Activated CD8-positive, alpha-beta T cell treated with anti-CD3 and anti-CD28 coated beads, Interleukin-2, amount 10 ng/mL, durations not matched to agents 7 days and 5 days (primary cell): ENCODE measurements at regions of chr4 and their contacts with region 1.

Region 1: GRCh38 chr4:82360298-82361177 is 13.3 kb downstream of the HNRNPD start:
- DNase-seq: no peak
- ATAC-seq: peak; percentile 51
- H3K4me3 Mint-ChIP-seq: no peak overlapping the region
- H3K27ac Mint-ChIP-seq: peak overlapping the region; percentile 6
- H3K4me1 Mint-ChIP-seq: peaks cover 87% of the 10 kb centered on the region
- H3K27me3 Mint-ChIP-seq: no peaks in the 10 kb centered on the region

Region 2: DNA sequence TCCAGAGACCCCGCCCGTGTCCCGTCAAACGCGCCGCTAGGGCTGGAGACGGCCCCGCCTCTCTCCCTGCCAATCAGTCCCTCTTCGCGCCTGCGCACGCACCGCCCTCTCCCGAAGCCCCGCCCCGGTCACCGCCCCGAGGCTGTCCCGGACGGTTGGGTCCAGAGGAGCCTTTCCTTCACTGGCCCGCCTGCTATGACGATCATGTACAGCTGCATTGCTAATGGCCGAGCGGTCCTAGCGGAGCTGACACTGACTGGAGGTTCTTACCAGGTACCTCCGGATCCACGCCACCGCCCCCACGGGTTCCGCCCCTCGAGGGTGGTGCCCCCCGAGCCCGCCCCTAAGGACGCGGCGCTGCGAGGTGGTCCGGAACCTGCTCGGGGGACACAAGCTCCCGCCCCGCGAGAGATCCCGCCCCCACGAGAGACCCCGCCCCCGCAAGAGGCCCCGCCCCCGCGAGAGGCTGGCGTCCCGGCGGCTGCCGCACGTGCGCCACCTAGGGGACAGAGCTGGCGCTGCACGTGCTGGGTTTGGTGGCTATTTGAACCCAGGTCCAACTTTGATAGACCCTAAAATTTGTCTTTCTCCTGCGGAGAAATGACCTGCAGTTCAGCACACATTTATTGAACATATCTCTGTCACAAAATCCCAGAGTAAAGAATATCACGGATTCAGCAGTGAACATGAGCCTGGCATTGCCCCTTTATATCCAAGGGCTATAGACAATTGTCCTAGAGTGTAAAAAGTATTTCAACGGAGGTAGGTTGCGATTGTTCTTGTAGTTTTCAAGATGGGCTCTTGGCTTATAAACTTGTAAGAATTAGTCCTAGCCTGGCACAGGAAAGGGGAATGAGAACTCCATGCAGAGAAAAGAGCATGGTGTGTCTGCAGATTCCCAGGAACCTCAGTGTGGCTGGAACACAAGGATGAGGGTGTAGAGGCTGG is 75.4 kb before region 1 on chr4:
- CTCF ChIA-PET with region 1: interaction called, 17 read pairs
- POLR2A ChIA-PET with region 1: no interaction called
- DNase-seq: peak; percentile 99
- ATAC-seq: peak; percentile 99
- H3K4me3 Mint-ChIP-seq: peak overlapping the region; percentile 74
- H3K27ac Mint-ChIP-seq: peak overlapping the region; percentile 81
- H3K4me1 Mint-ChIP-seq: peaks cover 11% of the 10 kb centered on the region
- H3K27me3 Mint-ChIP-seq: peaks cover 21% of the 10 kb centered on the region

Region 3: DNA sequence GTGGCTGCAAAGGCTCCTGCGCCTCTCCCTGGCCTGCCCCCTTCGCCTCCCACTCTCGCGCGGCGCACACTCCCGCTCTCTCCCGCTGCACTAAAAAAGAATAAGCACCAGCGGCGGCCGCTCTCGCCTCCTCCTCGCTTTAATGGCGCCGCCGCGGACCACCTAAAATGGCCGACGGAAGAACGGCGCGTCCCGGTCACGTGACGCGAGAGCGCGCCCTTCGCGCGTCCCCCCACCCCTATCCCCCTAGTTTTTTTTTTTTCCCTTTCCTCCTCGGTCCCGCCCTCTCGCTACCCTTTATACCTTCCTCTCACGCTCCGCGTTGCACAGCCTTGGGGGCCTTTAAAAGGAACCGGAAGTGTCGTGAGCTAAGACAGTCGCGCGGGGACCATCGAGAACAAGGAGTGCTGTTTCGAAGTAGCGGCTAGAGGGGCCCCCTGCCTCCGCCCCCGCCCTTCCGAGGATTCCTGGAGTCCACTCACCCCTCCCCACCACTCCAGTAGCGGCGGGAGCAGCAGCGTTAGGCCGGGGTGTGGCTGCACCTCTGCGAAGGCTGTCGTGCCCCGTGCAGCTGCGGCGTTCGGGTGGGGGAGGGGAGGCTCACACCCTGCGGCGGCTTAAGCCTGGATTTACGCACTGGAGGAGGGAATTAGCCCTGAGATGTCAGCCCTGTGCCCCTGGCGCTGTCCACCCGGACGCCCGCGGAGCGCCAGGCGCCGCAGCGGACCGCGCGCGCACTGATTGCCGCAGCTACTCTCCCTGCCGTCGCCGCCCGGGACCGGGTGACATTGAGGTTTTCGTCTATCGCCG is 13.5 kb after region 1 on chr4 and contains the start of gene HNRNPD:
- CTCF ChIA-PET with region 1: interaction called, 39 read pairs
- POLR2A ChIA-PET with region 1: interaction called, 34 read pairs
- DNase-seq: peak; percentile 98
- ATAC-seq: peak; percentile 92
- H3K4me3 Mint-ChIP-seq: peak within 1 kb of the TSS; percentile 98
- H3K27ac Mint-ChIP-seq: peak within 1 kb of the TSS; percentile 96
- H3K4me1 Mint-ChIP-seq: peaks cover 39% of the 10 kb centered on the region
- H3K27me3 Mint-ChIP-seq: no peaks in the 10 kb centered on the region
- total RNA-seq, gene HNRNPD: 405 to 406 TPM